GM12878 (cell line): ENCODE measurements at regions of chr18 and their contacts with region 1.

Region 1: DNA sequence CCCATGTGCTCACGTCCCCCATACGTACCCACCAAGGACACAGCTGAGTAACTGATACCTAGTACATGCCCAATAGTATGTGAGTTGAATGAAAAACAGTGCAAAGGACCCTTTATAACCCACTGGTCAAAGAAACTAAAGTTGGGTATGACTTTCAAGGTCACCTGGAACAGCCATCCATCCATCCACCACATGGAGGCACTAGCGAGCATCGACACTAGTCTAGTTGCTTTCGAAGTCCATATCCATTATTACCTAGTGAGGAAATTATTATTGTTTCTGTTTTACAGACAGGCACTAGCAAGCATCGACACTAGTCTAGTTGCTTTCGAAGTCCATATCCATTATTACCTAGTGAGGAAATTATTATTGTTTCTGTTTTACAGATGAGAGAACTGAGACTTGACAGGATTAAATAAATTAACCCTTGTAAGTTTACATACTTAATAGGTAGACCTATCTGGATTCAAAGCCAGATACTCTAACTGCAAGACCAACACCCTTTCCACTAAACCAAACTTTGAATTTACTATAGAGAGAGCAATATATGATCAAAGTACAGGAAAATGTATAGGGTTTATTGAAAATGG is 233.7 kb downstream of the METTL4 start:
- DNase-seq: no peak
- ATAC-seq: peak; percentile 95
- H3K4me3 ChIP-seq: no peak overlapping the region
- H3K27ac ChIP-seq: no peak overlapping the region
- H3K4me1 ChIP-seq: no peaks in the 10 kb centered on the region
- H3K27me3 ChIP-seq: no peaks in the 10 kb centered on the region
- CTCF ChIP-seq: peak; percentile 54 to 74 (median 68)
- EP300 ChIP-seq: no peak
- POLR2A ChIP-seq: no peak
- RAD21 ChIP-seq: peak; percentile 50; the same call in 1 of the 2 replicates

Region 2: GRCh38 chr18:2139691-2140090 is 198.0 kb before region 1 on chr18:
- CTCF ChIA-PET with region 1: no interaction called
- POLR2A ChIA-PET with region 1: no interaction called
- RAD21 ChIA-PET with region 1: no interaction called
- SMC1A ChIA-PET with region 1: no interaction called
- in situ Hi-C with region 1: no loop called
- intact Hi-C with region 1: no loop called
- DNase-seq: no peak
- ATAC-seq: no peak
- H3K4me3 ChIP-seq: no peak overlapping the region
- H3K27ac ChIP-seq: no peak overlapping the region
- H3K4me1 ChIP-seq: no peaks in the 10 kb centered on the region
- H3K27me3 ChIP-seq: no peaks in the 10 kb centered on the region
- CTCF ChIP-seq: no peak
- EP300 ChIP-seq: no peak
- POLR2A ChIP-seq: no peak
- RAD21 ChIP-seq: no peak

Region 3: GRCh38 chr18:2312440-2312839 is 25.2 kb before region 1 on chr18:
- CTCF ChIA-PET with region 1: interaction called, 5 read pairs
- POLR2A ChIA-PET with region 1: no interaction called
- RAD21 ChIA-PET with region 1: interaction called, 5 read pairs
- SMC1A ChIA-PET with region 1: interaction called, 11 read pairs
- in situ Hi-C with region 1: no loop called
- intact Hi-C with region 1: no loop called
- DNase-seq: peak; percentile 20
- ATAC-seq: peak; percentile 87
- H3K4me3 ChIP-seq: no peak overlapping the region
- H3K27ac ChIP-seq: no peak overlapping the region
- H3K4me1 ChIP-seq: no peaks in the 10 kb centered on the region
- H3K27me3 ChIP-seq: 0 out of 4 replicates have a peak, but pooled peaks cover 0 to 2% of the 10 kb centered on the region in 2 experiments
- CTCF ChIP-seq: no peak
- EP300 ChIP-seq: peak in 1 of 2 experiments; percentile 35; a peak in 1 of 4 replicates
- POLR2A ChIP-seq: no peak
- RAD21 ChIP-seq: no peak

Region 4: GRCh38 chr18:2325308-2325849 is 12.3 kb before region 1 on chr18:
- CTCF ChIA-PET with region 1: interaction called, 30 read pairs
- POLR2A ChIA-PET with region 1: no interaction called
- RAD21 ChIA-PET with region 1: interaction called, 4 read pairs
- SMC1A ChIA-PET with region 1: interaction called, 11 read pairs
- in situ Hi-C with region 1: no loop called
- intact Hi-C with region 1: no loop called
- DNase-seq: no peak
- ATAC-seq: peak; percentile 49
- H3K4me3 ChIP-seq: no peak overlapping the region
- H3K27ac ChIP-seq: no peak overlapping the region
- H3K4me1 ChIP-seq: no peaks in the 10 kb centered on the region
- H3K27me3 ChIP-seq: no peaks in the 10 kb centered on the region
- CTCF ChIP-seq: no peak
- EP300 ChIP-seq: no peak
- POLR2A ChIP-seq: no peak
- RAD21 ChIP-seq: no peak

Region 5: DNA sequence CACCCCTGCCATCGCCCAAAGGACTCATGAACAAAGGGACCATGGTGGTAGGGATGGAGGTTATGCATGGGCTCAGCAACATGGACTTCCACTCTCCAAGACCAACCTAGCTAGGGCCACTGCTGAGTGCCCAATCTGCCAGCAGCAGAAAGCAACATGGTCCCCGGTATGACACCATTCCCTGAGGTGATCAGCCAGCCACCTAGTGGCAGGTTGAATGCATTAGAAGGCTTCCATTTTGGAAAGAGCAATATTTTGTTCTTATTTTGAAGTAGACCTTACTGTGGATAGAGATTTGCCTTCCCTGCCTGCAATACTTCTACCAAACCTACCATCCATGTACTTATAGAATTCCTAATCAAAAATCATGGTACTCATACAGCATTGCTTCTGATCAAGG is 133.9 kb after region 1 on chr18:
- CTCF ChIA-PET with region 1: interaction called, 7 read pairs
- POLR2A ChIA-PET with region 1: no interaction called
- RAD21 ChIA-PET with region 1: interaction called, 4 read pairs
- SMC1A ChIA-PET with region 1: interaction called, 4 read pairs
- in situ Hi-C with region 1: no loop called
- intact Hi-C with region 1: loop called (anchors 5 kb)
- DNase-seq: no peak
- ATAC-seq: peak; percentile 71
- H3K4me3 ChIP-seq: no peak overlapping the region
- H3K27ac ChIP-seq: no peak overlapping the region
- H3K4me1 ChIP-seq: no peaks in the 10 kb centered on the region
- H3K27me3 ChIP-seq: no peaks in the 10 kb centered on the region
- CTCF ChIP-seq: peak in 2 of 3 experiments; percentile 32 to 48; a peak in 3 of 6 replicates
- EP300 ChIP-seq: no peak
- POLR2A ChIP-seq: no peak
- RAD21 ChIP-seq: no peak

Region 6: DNA sequence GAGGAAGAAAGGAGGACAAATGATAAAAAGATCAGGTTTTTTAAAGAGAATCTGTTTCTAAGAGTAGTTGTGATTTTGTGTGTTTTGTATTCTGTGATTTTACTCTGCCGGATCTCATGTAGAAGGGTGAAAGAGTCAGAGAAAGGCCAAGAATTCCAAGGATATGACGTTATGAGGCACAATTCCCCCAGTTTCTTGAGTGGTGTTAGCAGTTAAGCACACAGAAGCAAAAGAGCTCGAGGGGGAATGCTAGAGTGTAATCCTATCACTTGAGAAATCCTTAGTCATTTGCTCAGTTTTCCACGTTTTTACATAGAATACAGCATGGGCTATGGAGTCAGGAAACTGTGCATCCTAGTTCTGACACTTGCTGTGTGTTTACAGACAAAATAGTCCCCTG is 198.8 kb after region 1 on chr18:
- CTCF ChIA-PET with region 1: interaction called, 74 read pairs
- POLR2A ChIA-PET with region 1: no interaction called
- RAD21 ChIA-PET with region 1: interaction called, 32 read pairs
- SMC1A ChIA-PET with region 1: interaction called, 48 read pairs
- in situ Hi-C with region 1: no loop called
- intact Hi-C with region 1: no loop called
- DNase-seq: no peak
- ATAC-seq: no peak
- H3K4me3 ChIP-seq: no peak overlapping the region
- H3K27ac ChIP-seq: no peak overlapping the region
- H3K4me1 ChIP-seq: no peaks in the 10 kb centered on the region
- H3K27me3 ChIP-seq: no peaks in the 10 kb centered on the region
- CTCF ChIP-seq: no peak
- EP300 ChIP-seq: no peak
- POLR2A ChIP-seq: no peak
- RAD21 ChIP-seq: no peak